ENCODE measurements at regions of chr3 and their contacts with region 1.

Region 1: GRCh38 chr3:124529826-124530571 is 200.3 kb upstream of the UMPS start:
- DNase-seq: peak; percentile 58
- H3K4me3 ChIP-seq: no peak overlapping the region
- H3K27ac ChIP-seq: no peak overlapping the region
- H3K4me1 ChIP-seq: peaks cover 37% of the 10 kb centered on the region
- H3K27me3 ChIP-seq: no peaks in the 10 kb centered on the region
- CTCF ChIP-seq: no peak

Region 2: GRCh38 chr3:124492811-124493210 is 37.2 kb before region 1 on chr3:
- CTCF ChIA-PET with region 1: no interaction called
- dilution Hi-C with region 1: no loop called
- in situ Hi-C with region 1: no loop called
- intact Hi-C with region 1: loop called (anchors 2 kb)
- DNase-seq: peak; percentile 68
- H3K4me3 ChIP-seq: no peak overlapping the region
- H3K27ac ChIP-seq: no peak overlapping the region
- H3K4me1 ChIP-seq: peaks cover 10% of the 10 kb centered on the region
- H3K27me3 ChIP-seq: no peaks in the 10 kb centered on the region
- CTCF ChIP-seq: peak; percentile 75 to 86

Region 3: GRCh38 chr3:124510290-124510689 is 19.7 kb before region 1 on chr3:
- CTCF ChIA-PET with region 1: no interaction called
- dilution Hi-C with region 1: no loop called
- in situ Hi-C with region 1: no loop called
- intact Hi-C with region 1: loop called (anchors 1 kb)
- DNase-seq: peak; percentile 71
- H3K4me3 ChIP-seq: no peak overlapping the region
- H3K27ac ChIP-seq: peak overlapping the region; percentile 50
- H3K4me1 ChIP-seq: peaks cover 17% of the 10 kb centered on the region
- H3K27me3 ChIP-seq: no peaks in the 10 kb centered on the region
- CTCF ChIP-seq: no peak

Region 4: GRCh38 chr3:124639406-124640237 is 109.6 kb after region 1 on chr3:
- CTCF ChIA-PET with region 1: no interaction called
- dilution Hi-C with region 1: no loop called
- in situ Hi-C with region 1: no loop called
- intact Hi-C with region 1: no loop called
- DNase-seq: no peak
- H3K4me3 ChIP-seq: no peak overlapping the region
- H3K27ac ChIP-seq: no peak overlapping the region
- H3K4me1 ChIP-seq: no peaks in the 10 kb centered on the region
- H3K27me3 ChIP-seq: no peaks in the 10 kb centered on the region
- CTCF ChIP-seq: no peak

Region 5: DNA sequence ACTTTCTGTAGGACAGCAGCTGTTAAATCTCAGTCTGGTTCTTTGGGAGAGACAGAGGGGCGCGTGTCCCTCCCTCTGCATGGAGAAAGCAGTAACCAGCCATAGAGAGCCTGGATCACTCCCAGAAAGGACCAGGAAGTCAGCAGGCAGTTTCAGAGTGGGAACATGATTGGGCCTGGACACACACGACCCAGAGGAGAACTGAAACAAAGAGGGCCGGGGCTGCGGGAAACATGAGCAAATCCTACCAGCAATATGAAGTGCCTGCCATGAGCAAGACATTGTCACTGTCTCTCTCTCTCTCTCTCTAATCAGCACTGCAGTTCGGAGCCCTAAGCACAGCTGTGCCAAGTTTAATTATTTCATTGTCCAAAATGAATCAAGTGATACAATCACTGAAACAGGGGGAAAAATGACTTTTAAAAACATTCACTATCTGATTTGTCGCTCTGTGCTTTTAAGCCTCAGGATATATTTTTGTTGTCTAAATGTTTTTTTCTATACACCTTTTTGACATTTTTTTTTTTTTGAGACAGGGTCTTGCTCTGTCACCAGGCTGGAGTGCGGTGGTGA is 386.9 kb after region 1 on chr3:
- CTCF ChIA-PET with region 1: no interaction called
- dilution Hi-C with region 1: no loop called
- in situ Hi-C with region 1: no loop called
- intact Hi-C with region 1: no loop called
- DNase-seq: no peak
- H3K4me3 ChIP-seq: no peak overlapping the region
- H3K27ac ChIP-seq: no peak overlapping the region
- H3K4me1 ChIP-seq: no peaks in the 10 kb centered on the region
- H3K27me3 ChIP-seq: no peaks in the 10 kb centered on the region
- CTCF ChIP-seq: no peak